CD8-positive, alpha-beta T cell (primary cell): ENCODE measurements at regions of chr3 and their contacts with region 1.

Region 1: DNA sequence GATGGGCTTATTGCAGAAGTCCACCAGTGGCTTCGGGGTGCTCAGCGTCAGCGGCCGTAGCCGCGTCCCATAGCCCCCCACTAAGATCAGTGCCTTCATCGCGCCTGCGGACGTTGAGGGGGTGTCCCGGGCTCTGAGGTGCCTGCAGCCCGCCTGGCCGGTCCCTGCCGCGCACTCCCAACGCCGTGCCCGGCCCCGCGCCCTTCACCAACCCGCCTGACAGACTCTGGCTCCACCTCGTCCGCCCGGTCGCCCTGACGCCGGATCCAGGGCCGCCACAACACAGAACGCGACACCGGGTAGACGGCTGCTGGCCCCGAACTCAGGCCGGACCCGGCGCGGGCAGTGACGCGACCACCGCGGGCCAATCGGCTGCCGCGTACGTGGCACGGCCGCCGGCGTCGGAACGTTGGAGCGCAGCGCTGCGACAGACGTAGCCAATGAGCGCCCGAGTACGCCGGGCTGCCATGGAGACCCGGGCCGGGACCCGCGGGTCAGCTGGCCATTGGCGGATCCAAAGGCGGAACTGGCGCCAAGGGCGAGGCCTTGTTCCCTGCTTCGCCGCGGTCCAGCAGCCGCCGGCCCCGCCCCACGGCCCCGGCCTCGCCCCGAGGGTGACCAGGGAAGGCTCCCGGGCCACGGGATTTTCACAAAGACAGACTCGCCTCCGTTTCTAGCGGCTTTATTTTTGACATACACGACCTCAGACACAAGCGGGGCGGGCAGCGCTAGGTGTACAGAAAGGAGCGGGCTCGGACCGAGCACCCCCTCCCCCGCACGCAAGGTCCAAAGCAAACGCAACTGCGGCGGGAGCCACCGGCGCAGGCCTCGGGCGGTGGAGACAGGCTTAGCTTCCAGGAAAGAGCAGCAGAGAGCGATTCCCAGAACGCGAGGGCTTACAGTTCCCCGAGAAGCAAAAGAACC is at the start of gene GMPPB:
- DNase-seq: peak; percentile 82 to 95 (median 91)
- ATAC-seq: peak; percentile 72
- H3K4me3 ChIP-seq: peak within 1 kb of the TSS; percentile 91 to 95
- H3K4me3 Mint-ChIP-seq: peak within 1 kb of the TSS; percentile 86
- H3K27ac ChIP-seq: peak within 1 kb of the TSS; percentile 84 to 93
- H3K27ac Mint-ChIP-seq: peak within 1 kb of the TSS; percentile 90
- H3K4me1 ChIP-seq: peaks cover 19% of the 10 kb centered on the region
- H3K4me1 Mint-ChIP-seq: peaks cover 36% of the 10 kb centered on the region
- H3K27me3 ChIP-seq: no peaks in the 10 kb centered on the region
- H3K27me3 Mint-ChIP-seq: no peaks in the 10 kb centered on the region
- CTCF ChIP-seq: no peak
- total RNA-seq, gene GMPPB: 34.9 to 36.6 TPM

Region 2: DNA sequence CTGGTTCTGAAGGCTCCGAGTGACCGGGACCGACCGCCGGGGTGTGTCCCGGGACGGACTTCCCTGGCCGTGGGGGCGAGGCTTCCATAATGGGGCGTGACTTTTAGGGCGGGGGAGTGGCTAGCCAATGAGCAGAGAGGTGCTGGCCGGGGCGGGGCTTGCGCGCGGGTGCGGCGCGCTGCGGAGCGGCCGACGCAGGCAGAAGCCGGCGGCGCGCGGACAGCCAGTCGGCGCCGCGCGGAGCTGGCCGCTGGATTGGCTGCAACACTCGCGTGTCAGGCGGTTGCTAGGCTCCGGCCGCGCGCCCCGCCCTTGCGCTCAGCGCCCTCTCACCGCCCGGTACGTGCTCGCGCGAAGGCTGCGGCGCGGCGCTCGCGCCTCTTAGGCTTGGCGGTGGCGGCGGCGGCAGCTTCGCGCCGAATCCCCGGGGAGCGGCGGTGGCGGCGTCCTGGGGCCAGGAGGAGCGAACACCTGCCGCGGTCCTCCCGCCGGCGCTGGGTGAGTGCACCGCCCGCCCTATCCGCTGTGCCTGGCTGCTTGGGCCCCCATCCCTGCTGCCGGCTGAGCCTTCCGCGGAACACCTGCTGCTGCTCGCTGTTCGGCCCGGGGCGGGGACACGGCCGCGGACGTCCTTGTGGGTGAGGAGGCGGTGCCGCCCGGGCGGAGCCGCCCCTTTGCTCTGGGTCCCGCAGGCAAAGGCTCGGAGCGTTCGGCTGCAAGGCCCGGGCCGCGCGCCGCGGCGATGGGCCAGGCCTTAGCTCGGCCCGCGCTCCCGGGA is 253.8 kb before region 1 on chr3 and contains the start of gene DAG1:
- CTCF ChIA-PET with region 1: no interaction called
- POLR2A ChIA-PET with region 1: no interaction called
- intact Hi-C with region 1: loop called in 1 of 2 experiments (anchors 2 kb)
- DNase-seq: peak; percentile 89 to 99 (median 95)
- ATAC-seq: peak; percentile 85
- H3K4me3 ChIP-seq: peak within 1 kb of the TSS; percentile 83 to 97
- H3K4me3 Mint-ChIP-seq: peak within 1 kb of the TSS; percentile 88
- H3K27ac ChIP-seq: peak within 1 kb of the TSS; percentile 86 to 87
- H3K27ac Mint-ChIP-seq: peak within 1 kb of the TSS; percentile 94
- H3K4me1 ChIP-seq: peaks cover 21% of the 10 kb centered on the region
- H3K4me1 Mint-ChIP-seq: peaks cover 24% of the 10 kb centered on the region
- H3K27me3 ChIP-seq: no peaks in the 10 kb centered on the region
- H3K27me3 Mint-ChIP-seq: no peaks in the 10 kb centered on the region
- CTCF ChIP-seq: no peak
- total RNA-seq, gene DAG1: 17.0 to 19.9 TPM

Region 3: DNA sequence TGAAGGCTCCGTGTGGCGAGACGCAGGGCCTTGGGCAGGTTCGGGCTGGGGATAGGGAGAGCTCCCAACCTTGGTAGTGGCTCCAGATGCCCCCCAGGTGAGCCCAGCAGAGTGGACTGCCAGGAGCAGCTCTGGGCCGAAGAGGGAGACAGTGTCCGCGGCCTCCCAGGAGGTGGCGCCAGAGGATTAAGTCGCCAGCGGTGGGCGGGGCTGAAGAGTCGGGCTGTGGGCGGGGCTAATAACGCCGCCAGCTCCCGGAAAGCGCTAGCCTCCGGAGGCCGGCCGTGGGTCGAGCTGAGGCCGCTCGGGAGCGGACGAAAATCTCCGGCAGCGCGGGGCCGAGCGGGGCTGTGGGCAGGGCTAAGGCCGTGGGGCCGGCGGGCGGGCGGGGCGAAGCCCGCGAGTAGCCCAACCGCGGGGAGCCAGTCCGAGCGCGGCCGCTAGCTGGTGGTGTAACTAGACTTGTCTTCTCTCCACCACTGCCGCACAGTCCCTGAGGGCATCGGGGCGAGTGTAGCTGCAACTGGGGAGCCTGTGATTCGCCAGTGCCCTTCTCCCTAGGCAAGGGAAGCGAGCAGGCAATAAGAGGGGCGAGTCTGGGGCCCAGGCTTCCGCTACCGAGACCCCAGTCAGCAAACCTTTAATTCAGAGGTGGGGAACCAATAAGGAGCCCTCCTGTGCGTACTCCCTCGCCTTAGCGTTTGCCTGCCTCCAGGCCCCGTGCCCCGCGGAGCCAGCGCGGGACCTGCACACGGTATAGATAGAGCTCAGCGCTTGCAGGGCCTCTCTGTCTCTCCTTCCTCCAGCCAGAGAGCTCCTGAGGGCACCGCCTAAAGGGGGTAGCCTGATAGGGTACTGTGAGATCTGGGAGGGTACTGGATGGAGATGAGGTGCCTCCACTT is 184.0 kb before region 1 on chr3:
- CTCF ChIA-PET with region 1: interaction called, 17 read pairs
- POLR2A ChIA-PET with region 1: interaction called, 7 read pairs
- intact Hi-C with region 1: loop called in 1 of 2 experiments (anchors 1 kb)
- DNase-seq: peak; percentile 83 to 97 (median 92)
- ATAC-seq: peak; percentile 96
- H3K4me3 ChIP-seq: peak overlapping the region; percentile 65 to 71
- H3K4me3 Mint-ChIP-seq: peak overlapping the region; percentile 82
- H3K27ac ChIP-seq: peak overlapping the region; percentile 46 to 67
- H3K27ac Mint-ChIP-seq: peak overlapping the region; percentile 32
- H3K4me1 ChIP-seq: peaks cover 4% of the 10 kb centered on the region
- H3K4me1 Mint-ChIP-seq: peaks cover 2% of the 10 kb centered on the region
- H3K27me3 ChIP-seq: no peaks in the 10 kb centered on the region
- H3K27me3 Mint-ChIP-seq: peaks cover 10% of the 10 kb centered on the region
- CTCF ChIP-seq: peak; percentile 76

Region 4: DNA sequence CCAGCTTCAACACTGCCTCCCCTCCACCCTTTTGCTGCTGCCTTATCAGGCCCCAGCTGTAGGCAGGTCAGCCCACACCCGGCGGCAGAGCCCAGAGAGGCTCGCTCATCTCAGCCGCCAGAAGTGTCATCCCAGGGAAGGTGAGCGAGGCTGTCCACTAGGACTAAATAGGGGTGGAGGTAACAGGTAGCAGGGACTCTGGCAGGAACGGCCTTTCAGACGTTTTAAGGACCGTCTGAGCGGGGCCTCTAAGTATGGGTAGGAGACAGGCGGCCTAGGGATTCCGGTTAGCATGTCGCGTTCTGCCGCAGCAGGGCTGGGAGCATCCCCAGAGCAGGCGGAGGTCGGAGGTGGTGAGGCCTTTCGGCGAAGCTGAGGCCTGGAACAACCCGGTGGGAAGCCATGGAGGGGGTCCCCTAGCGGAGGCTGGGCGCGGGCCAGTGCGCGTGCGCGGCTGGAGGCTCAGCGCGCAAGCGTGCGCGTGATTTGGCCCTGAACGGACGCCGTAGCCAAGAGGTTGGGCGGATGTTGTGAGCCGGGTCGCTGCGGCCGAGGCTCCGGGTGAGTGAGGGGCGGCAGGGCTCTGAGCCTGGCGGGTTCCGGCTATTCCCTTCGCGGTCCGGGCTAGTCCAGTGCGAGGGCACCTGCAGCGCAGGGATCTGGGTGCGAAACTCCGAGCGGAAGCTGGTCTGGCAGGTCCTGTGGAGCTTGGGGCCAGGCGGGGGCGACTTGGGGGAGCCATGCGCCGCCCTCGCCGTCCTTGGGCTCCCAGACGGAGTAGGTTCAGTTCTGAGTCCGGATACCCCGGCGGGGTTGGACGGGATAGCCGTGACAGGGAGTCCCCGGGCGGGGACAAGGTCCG is 34.6 kb before region 1 on chr3 and contains the starts of genes MST1 and RNF123:
- CTCF ChIA-PET with region 1: no interaction called
- POLR2A ChIA-PET with region 1: no interaction called
- intact Hi-C with region 1: loop called in 1 of 2 experiments (anchors 2 kb)
- DNase-seq: peak; percentile 81 to 97 (median 92)
- ATAC-seq: peak; percentile 84
- H3K4me3 ChIP-seq: peak within 1 kb of the TSS; percentile 96 to 99
- H3K4me3 Mint-ChIP-seq: peak within 1 kb of the TSS; percentile 95
- H3K27ac ChIP-seq: peak within 1 kb of the TSS; percentile 73 to 78
- H3K27ac Mint-ChIP-seq: peak within 1 kb of the TSS; percentile 95
- H3K4me1 ChIP-seq: peaks cover 22% of the 10 kb centered on the region
- H3K4me1 Mint-ChIP-seq: peaks cover 45% of the 10 kb centered on the region
- H3K27me3 ChIP-seq: peaks cover 0 to 8% of the 10 kb centered on the region in 2 experiments
- H3K27me3 Mint-ChIP-seq: no peaks in the 10 kb centered on the region
- CTCF ChIP-seq: no peak
- total RNA-seq, gene MST1: 8.6 to 9.1 TPM
- total RNA-seq, gene RNF123: 23.7 to 27.0 TPM

Region 5: DNA sequence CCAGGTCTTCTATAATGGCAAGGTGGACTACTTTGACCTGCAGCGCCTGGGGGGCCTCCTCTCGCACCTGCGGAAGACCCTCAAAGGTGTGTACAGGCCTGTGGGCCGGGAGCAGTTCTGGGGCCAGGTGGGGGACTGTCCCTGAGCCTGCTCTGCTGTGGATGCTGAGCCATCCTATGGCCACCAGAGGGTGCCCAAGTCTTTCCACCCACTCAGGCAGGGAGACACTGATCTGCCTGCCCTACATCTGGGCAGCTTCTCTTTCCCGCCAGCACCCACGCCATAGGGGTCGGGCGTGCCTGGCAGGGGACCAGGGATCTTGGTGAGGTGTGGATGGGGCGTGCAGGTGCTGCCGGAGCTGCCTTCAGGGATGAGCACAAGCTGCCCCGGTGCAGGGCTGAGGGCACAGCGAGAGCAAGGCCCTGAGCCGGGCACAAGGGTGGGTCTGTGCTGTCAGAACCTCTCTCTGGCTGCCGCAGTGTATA is 20.4 kb before region 1 on chr3:
- CTCF ChIA-PET with region 1: interaction called, 6 read pairs
- POLR2A ChIA-PET with region 1: no interaction called
- intact Hi-C with region 1: loop called in 1 of 2 experiments (anchors 1 kb)
- DNase-seq: peak; percentile 39 to 81 (median 67)
- ATAC-seq: peak; percentile 100
- H3K4me3 ChIP-seq: no peak overlapping the region
- H3K4me3 Mint-ChIP-seq: no peak overlapping the region
- H3K27ac ChIP-seq: no peak overlapping the region
- H3K27ac Mint-ChIP-seq: no peak overlapping the region
- H3K4me1 ChIP-seq: no peaks in the 10 kb centered on the region
- H3K4me1 Mint-ChIP-seq: no peaks in the 10 kb centered on the region
- H3K27me3 ChIP-seq: no peaks in the 10 kb centered on the region
- H3K27me3 Mint-ChIP-seq: no peaks in the 10 kb centered on the region
- CTCF ChIP-seq: peak; percentile 74

Region 6: DNA sequence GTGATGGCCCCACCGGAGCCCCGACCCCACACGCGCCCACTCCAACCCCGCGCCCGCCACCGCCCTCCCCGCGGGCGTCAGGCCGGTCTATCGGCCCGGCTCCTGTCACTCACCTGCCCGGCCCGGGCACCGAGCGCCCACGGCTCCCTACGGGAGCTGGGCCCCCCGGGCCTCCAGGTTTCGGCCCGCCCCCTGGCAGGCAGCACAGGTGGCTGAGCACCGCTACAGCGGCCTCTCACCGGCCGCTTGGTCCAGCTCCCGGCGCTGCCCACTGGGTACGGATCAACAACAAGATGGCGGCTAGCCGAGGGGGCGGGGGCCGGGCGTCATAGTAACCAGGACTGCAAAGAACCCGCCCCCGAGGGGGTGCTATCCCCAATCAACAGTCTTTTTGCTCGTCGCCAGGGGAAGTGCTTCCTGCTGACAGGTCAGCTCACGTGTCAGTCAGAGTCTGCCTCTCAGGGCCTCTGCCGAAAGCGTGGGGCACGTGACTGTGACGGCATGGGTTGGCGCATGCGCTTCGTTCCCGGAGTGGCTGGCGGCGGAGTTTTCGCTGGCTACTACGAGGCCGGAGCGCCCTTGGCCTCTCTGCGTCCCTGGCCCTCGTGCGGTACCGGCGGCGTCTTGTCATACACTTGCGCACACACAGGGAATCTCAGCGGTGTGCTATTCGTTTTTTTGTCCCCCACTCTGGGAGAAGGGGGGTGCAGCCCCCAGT is 62.5 kb after region 1 on chr3 and contains the start of gene IP6K1:
- CTCF ChIA-PET with region 1: no interaction called
- POLR2A ChIA-PET with region 1: interaction called, 6 read pairs
- intact Hi-C with region 1: loop called (anchors 1 to 2 kb)
- DNase-seq: peak; percentile 98 to 100 (median 99)
- ATAC-seq: peak; percentile 98
- H3K4me3 ChIP-seq: peak within 1 kb of the TSS; percentile 86 to 87
- H3K4me3 Mint-ChIP-seq: peak within 1 kb of the TSS; percentile 95
- H3K27ac ChIP-seq: peak within 1 kb of the TSS; percentile 87 to 94
- H3K27ac Mint-ChIP-seq: peak within 1 kb of the TSS; percentile 99
- H3K4me1 ChIP-seq: peaks cover 29% of the 10 kb centered on the region
- H3K4me1 Mint-ChIP-seq: peaks cover 40% of the 10 kb centered on the region
- H3K27me3 ChIP-seq: no peaks in the 10 kb centered on the region
- H3K27me3 Mint-ChIP-seq: no peaks in the 10 kb centered on the region
- CTCF ChIP-seq: no peak
- total RNA-seq, gene IP6K1: 34.3 to 36.6 TPM

Region 7: GRCh38 chr3:49929331-49930240 is 205.7 kb after region 1 on chr3 and contains the start of gene MON1A:
- CTCF ChIA-PET with region 1: no interaction called
- POLR2A ChIA-PET with region 1: no interaction called
- intact Hi-C with region 1: loop called in 1 of 2 experiments (anchors 10 kb)
- DNase-seq: peak; percentile 64 to 91 (median 85)
- ATAC-seq: peak; percentile 94
- H3K4me3 ChIP-seq: peak within 1 kb of the TSS; percentile 80 to 99
- H3K4me3 Mint-ChIP-seq: peak within 1 kb of the TSS; percentile 82
- H3K27ac ChIP-seq: peak within 1 kb of the TSS; percentile 68 to 72
- H3K27ac Mint-ChIP-seq: peak within 1 kb of the TSS; percentile 79
- H3K4me1 ChIP-seq: peaks cover 12% of the 10 kb centered on the region
- H3K4me1 Mint-ChIP-seq: peaks cover 34% of the 10 kb centered on the region
- H3K27me3 ChIP-seq: no peaks in the 10 kb centered on the region
- H3K27me3 Mint-ChIP-seq: no peaks in the 10 kb centered on the region
- CTCF ChIP-seq: no peak
- total RNA-seq, gene MON1A: 1.2 TPM